ENCODE measurements at regions of chr7 and their contacts with region 1.

Region 1: DNA sequence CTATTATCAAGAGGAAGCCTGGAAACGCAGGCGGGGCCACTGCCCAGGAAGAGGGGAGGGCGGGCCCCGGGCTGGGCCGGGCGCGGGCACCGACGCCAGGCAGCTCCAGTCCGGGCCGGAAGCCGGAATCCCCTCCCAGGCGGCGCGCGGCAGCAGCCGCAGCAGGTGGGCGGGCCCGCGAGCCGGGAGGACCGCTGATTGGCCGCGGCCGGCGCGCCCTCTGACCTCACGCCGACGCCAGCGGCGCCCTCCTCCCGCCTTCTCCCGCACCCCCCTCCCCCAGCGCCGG is 438 bp downstream of the BCL7B start:
- DNase-seq: peak; percentile 85
- ATAC-seq: peak; percentile 95
- H3K4me3 ChIP-seq: peak overlapping the region; percentile 86 to 94 (median 90)
- H3K27ac ChIP-seq: peak overlapping the region; percentile 98
- H3K4me1 ChIP-seq: peaks cover 51% of the 10 kb centered on the region
- H3K27me3 ChIP-seq: no peaks in the 10 kb centered on the region; a peak in 1 of 5 replicates
- CTCF ChIP-seq: no peak
- EP300 ChIP-seq: 0 out of 4 replicates have a peak, but pooled peaks of 1 of the 2 experiments have one; percentile 21
- POLR2A ChIP-seq: peak in 1 of 2 experiments; percentile 52; a peak in 2 of 4 replicates
- RAD21 ChIP-seq: no peak

Region 2: GRCh38 chr7:73522105-73522872 is 34.8 kb before region 1 on chr7 and contains the start of gene BAZ1B:
- CTCF ChIA-PET with region 1: no interaction called
- POLR2A ChIA-PET with region 1: interaction called, 16 read pairs
- in situ Hi-C with region 1: no loop called
- intact Hi-C with region 1: loop called (anchors 5 kb)
- DNase-seq: peak; percentile 95
- ATAC-seq: peak; percentile 96
- H3K4me3 ChIP-seq: peak within 1 kb of the TSS; percentile 80 to 89 (median 82)
- H3K27ac ChIP-seq: peak within 1 kb of the TSS; percentile 91
- H3K4me1 ChIP-seq: peaks cover 31% of the 10 kb centered on the region
- H3K27me3 ChIP-seq: no peaks in the 10 kb centered on the region; a peak in 1 of 5 replicates
- CTCF ChIP-seq: 0 out of 2 replicates have a peak, but pooled peaks have one; percentile 31
- EP300 ChIP-seq: peak in 1 of 2 experiments; percentile 42; a peak in 1 of 4 replicates
- POLR2A ChIP-seq: peak; percentile 68 to 76
- RAD21 ChIP-seq: peak; percentile 33; the same call in 1 of the 2 replicates
- total RNA-seq, gene BAZ1B: 69.4 and 93.4 TPM in 2 replicates